GM18951 (cell line): ENCODE measurements at regions of chr17 and their contacts with region 1.

Region 1: GRCh38 chr17:39244600-39245570 is 19.1 kb upstream of the STAC2 start:
- POLR2A ChIP-seq: no peak

Region 2: DNA sequence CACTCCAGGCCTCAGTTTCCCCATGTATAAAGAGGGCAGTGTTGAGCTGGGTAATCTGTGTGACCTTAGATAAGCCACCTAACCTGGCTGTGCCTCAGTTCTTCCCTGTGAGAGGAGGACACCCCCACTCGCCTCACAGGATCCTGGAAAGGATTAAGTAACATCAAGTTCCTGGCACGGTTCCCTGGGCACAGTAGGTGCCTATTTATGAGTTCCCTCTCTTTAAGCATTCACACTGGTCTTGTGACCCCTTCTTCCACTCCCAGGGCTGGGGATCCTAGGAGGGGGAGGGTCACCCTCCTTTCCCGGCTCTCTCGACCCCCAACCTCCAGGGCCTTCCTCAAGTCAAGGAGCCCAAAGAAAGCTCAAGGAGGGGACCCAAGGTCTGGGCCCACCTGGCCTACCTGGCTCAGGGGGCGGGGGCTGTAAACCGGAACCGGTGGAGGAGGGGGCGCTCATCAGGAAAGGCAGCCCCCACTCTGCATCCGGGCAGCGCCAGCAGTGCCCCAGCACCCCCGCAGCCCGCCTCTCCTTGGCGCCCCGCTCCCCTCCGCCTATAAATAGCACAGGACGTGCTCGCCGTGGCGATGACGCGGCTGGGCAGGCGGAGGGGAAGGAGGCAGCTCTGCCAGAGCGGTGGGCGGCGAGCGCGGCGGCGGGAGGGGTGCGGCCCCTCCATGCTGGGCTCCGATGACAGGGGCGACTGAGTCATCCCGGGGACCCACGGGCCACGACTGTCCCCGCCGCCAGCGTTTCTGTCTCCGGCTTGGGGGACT is 35.4 kb before region 1 on chr17:
- in situ Hi-C with region 1: loop called (anchors 5 kb)
- POLR2A ChIP-seq: no peak